T-cell (primary cell): ENCODE measurements at regions of chr1 and their contacts with region 1.

Region 1: GRCh38 chr1:24822887-24823286 is 77.6 kb downstream of the CLIC4 start:
- DNase-seq: no peak
- ATAC-seq: no peak
- H3K4me3 ChIP-seq: no peak overlapping the region
- H3K4me3 Mint-ChIP-seq: no peak overlapping the region
- H3K27ac ChIP-seq: no peak overlapping the region
- H3K27ac Mint-ChIP-seq: no peak overlapping the region
- H3K4me1 ChIP-seq: no peaks in the 10 kb centered on the region
- H3K4me1 Mint-ChIP-seq: no peaks in the 10 kb centered on the region
- H3K27me3 ChIP-seq: peaks cover 0 to 6% of the 10 kb centered on the region in 2 experiments
- H3K27me3 Mint-ChIP-seq: peaks cover 0 to 7% of the 10 kb centered on the region in 2 donors

Region 2: GRCh38 chr1:24601023-24601527 is 221.8 kb before region 1 on chr1:
- CTCF ChIA-PET with region 1: no interaction called
- POLR2A ChIA-PET with region 1: no interaction called
- DNase-seq: no peak
- ATAC-seq: no peak
- H3K4me3 ChIP-seq: no peak overlapping the region
- H3K4me3 Mint-ChIP-seq: no peak overlapping the region
- H3K27ac ChIP-seq: no peak overlapping the region
- H3K27ac Mint-ChIP-seq: no peak overlapping the region
- H3K4me1 ChIP-seq: no peaks in the 10 kb centered on the region
- H3K4me1 Mint-ChIP-seq: no peaks in the 10 kb centered on the region
- H3K27me3 ChIP-seq: peaks cover 0 to 13% of the 10 kb centered on the region in 2 experiments
- H3K27me3 Mint-ChIP-seq: peaks cover 5 to 10% of the 10 kb centered on the region in 2 donors

Region 3: DNA sequence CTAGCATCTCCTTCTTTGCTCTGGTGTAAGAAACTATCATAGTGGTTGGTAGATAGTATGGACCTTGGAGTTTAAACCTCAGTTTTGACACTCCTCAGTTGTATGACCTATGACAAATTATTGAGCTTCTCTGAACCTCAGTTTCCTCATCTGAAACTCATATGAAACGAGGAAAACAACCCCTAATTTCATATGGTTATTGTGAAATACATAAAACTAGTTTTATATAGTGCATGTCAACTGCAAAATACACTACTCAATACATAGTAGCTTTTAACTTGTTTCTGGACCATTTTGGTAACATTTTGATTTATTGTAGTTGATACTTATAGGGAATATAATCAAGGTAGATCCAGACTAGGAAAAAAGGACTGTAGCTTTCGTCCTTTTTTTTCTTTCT is 44.7 kb before region 1 on chr1:
- CTCF ChIA-PET with region 1: interaction called in 1 of 2 experiments, 3 read pairs
- POLR2A ChIA-PET with region 1: interaction called in 1 of 2 experiments, 12 read pairs
- DNase-seq: no peak
- ATAC-seq: no peak
- H3K4me3 ChIP-seq: no peak overlapping the region
- H3K4me3 Mint-ChIP-seq: no peak overlapping the region
- H3K27ac ChIP-seq: no peak overlapping the region
- H3K27ac Mint-ChIP-seq: no peak overlapping the region
- H3K4me1 ChIP-seq: no peaks in the 10 kb centered on the region
- H3K4me1 Mint-ChIP-seq: no peaks in the 10 kb centered on the region
- H3K27me3 ChIP-seq: no peaks in the 10 kb centered on the region
- H3K27me3 Mint-ChIP-seq: peaks cover 0 to 2% of the 10 kb centered on the region in 2 donors

Region 4: GRCh38 chr1:24861821-24862727 is 39.2 kb after region 1 on chr1:
- CTCF ChIA-PET with region 1: no interaction called
- POLR2A ChIA-PET with region 1: no interaction called
- DNase-seq: no peak
- ATAC-seq: no peak
- H3K4me3 ChIP-seq: no peak overlapping the region
- H3K4me3 Mint-ChIP-seq: no peak overlapping the region
- H3K27ac ChIP-seq: no peak overlapping the region
- H3K27ac Mint-ChIP-seq: no peak overlapping the region
- H3K4me1 ChIP-seq: peaks cover 0 to 17% of the 10 kb centered on the region in 2 experiments
- H3K4me1 Mint-ChIP-seq: peaks cover 0 to 13% (median 0%) of the 10 kb centered on the region in 3 donors
- H3K27me3 ChIP-seq: peaks cover 0 to 12% of the 10 kb centered on the region in 2 experiments
- H3K27me3 Mint-ChIP-seq: peaks cover 0 to 4% of the 10 kb centered on the region in 2 donors

Region 5: GRCh38 chr1:24872061-24872850 is 49.4 kb after region 1 on chr1:
- CTCF ChIA-PET with region 1: no interaction called
- POLR2A ChIA-PET with region 1: no interaction called
- DNase-seq: no peak
- ATAC-seq: no peak
- H3K4me3 ChIP-seq: no peak overlapping the region
- H3K4me3 Mint-ChIP-seq: no peak overlapping the region
- H3K27ac ChIP-seq: no peak overlapping the region
- H3K27ac Mint-ChIP-seq: no peak overlapping the region
- H3K4me1 ChIP-seq: peaks cover 5 to 19% of the 10 kb centered on the region in 2 experiments
- H3K4me1 Mint-ChIP-seq: peaks cover 16 to 19% (median 18%) of the 10 kb centered on the region in 3 donors
- H3K27me3 ChIP-seq: peaks cover 0 to 17% of the 10 kb centered on the region in 2 experiments
- H3K27me3 Mint-ChIP-seq: peaks cover 0 to 4% of the 10 kb centered on the region in 2 donors